ENCODE measurements at regions of chr5 and their contacts with region 1.

Region 1: DNA sequence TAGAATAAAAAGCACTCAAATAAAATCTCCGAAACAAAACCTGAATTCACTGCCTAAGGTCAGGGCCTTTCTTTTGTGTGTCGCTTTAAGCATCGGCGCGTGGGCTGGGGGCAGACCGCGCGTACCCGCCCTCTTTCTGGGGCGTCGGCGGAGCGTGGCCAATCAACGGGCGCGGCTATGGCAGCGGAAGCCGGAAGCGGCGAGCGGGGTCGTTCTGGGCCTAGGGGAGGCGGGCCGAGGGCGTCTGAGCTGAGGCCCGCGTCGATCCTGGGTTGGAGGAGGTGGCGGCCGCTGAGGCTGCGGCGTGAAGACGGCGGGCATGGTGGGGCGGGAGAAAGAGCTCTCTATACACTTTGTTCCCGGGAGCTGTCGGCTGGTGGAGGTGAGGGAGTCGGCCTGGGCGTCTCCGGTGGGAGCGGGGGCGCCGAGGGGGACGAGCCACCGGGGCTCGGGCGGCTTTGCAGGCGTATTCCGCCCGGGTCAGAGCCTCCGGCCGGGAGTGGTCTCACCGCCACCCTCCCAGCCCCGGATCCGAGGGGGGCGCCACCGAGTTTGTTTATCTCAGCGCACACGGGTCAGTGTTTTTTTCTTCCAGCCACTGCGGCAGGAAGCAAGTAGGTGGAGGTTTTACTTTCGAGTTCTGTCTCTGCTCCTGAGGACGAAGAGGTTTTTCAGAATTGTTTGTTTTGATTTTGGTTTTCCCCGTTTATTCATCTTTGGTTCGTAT is at the start of gene MAT2B:
- DNase-seq: peak; percentile 95
- H3K4me3 ChIP-seq: peak within 1 kb of the TSS; percentile 81 to 90
- H3K27ac ChIP-seq: peak within 1 kb of the TSS; percentile 97 to 99
- H3K4me1 ChIP-seq: peaks cover 10% of the 10 kb centered on the region
- H3K27me3 ChIP-seq: no peaks in the 10 kb centered on the region
- CTCF ChIP-seq: peak; percentile 40 to 60 (median 45)
- POLR2A ChIP-seq: peak; percentile 91
- total RNA-seq, gene MAT2B: 53.9 to 68.5 TPM

Region 2: DNA sequence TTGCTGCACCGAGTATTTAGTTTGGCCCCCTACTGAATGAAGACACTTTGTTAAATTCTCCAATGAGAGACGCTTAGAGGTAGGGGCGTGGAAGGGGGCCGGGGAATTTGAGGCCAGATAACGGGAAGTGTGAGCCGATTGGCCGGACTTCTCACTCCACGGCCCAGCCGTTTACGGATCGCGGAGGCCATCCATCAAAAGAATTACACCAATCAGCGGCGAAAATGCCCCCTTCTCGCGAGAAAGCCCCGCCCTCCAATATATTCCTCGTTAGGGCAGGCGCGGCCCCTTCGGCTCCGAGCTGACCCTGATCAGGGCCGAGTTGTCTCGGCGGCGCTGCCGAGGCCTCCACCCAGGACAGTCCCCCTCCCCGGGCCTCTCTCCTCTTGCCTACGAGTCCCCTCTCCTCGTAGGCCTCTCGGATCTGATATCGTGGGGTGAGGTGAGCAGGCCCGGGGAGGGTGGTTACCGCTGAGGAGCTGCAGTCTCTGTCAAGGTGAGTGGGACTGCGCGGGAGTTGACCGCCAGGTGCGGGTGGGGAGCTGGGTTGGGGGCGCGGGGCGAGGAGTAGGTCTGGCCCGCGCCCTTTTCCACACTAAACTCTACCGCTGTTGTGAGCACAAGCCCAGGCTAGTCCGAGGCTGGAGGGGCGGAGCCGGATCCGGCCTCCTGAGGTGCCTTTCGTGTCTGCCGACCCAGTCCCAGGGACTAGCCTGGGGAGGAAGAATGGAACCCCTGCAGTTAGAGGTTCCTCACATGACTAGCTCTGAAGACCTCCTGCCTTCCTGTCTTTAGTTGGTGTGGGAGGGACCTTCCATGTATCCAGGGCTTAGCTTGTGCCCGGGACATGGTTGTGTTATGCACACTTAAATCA is 68.0 kb before region 1 on chr5 and contains the start of gene CCNG1:
- intact Hi-C with region 1: loop called (anchors 2 kb)
- DNase-seq: peak; percentile 96
- H3K4me3 ChIP-seq: peak within 1 kb of the TSS; percentile 77 to 92
- H3K27ac ChIP-seq: peak within 1 kb of the TSS; percentile 91 to 93
- H3K4me1 ChIP-seq: peaks cover 4% of the 10 kb centered on the region
- H3K27me3 ChIP-seq: no peaks in the 10 kb centered on the region
- CTCF ChIP-seq: no peak
- POLR2A ChIP-seq: peak; percentile 76
- total RNA-seq, gene CCNG1: 107 to 181 TPM

Region 3: DNA sequence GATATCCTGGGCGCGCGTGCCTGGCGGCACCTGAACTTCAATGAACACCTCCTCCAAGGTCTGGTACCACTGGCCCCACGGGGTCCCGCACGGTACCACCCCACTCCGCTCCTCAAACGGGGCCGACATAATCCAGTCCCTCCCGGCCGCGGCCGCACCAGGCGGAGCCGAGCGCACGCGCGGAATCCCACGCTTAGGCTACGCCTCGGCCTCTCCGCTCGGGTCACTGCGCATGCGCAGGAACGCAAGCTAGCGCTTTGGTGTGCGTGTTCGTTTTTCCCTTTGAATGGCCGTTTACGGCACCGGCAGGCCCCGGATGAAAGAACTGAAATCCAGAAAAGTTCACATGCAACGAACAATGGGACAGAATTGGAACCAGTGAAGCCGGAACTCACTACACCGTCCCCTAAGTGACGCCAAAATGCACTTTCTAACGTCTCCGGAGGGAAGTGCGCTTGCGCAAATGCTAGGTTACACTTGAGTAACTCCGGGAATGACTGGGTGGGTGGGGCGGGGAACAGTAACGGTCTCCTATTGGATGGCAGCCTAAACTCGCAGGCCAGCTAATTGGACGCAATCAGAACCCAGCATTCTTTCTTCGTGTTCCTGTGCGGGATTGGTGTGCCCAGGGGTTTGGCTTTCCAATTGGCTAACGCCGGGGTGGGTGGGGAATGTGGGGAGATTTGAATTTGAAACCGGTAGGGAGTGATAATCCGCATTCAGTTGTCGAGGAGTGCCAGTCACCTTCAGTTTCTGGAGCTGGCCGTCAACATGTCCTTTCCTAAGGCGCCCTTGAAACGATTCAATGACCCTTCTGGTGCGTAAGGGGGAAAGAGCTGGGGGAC is 45.4 kb before region 1 on chr5 and contains the starts of genes HMMR and NUDCD2:
- intact Hi-C with region 1: loop called (anchors 1 kb)
- DNase-seq: peak; percentile 96
- H3K4me3 ChIP-seq: peak within 1 kb of the TSS; percentile 59 to 63
- H3K27ac ChIP-seq: peak within 1 kb of the TSS; percentile 93 to 94
- H3K4me1 ChIP-seq: no peaks in the 10 kb centered on the region
- H3K27me3 ChIP-seq: no peaks in the 10 kb centered on the region
- CTCF ChIP-seq: peak in 2 of 4 experiments; percentile 24 to 49
- POLR2A ChIP-seq: peak; percentile 71
- total RNA-seq, gene HMMR: 1.7 to 1.8 TPM
- total RNA-seq, gene NUDCD2: 8.0 to 8.6 TPM

Measured in prostate gland (tissue), 2 donors.